ENCODE measurements at regions of chr6 and their contacts with region 1.

Region 1: DNA sequence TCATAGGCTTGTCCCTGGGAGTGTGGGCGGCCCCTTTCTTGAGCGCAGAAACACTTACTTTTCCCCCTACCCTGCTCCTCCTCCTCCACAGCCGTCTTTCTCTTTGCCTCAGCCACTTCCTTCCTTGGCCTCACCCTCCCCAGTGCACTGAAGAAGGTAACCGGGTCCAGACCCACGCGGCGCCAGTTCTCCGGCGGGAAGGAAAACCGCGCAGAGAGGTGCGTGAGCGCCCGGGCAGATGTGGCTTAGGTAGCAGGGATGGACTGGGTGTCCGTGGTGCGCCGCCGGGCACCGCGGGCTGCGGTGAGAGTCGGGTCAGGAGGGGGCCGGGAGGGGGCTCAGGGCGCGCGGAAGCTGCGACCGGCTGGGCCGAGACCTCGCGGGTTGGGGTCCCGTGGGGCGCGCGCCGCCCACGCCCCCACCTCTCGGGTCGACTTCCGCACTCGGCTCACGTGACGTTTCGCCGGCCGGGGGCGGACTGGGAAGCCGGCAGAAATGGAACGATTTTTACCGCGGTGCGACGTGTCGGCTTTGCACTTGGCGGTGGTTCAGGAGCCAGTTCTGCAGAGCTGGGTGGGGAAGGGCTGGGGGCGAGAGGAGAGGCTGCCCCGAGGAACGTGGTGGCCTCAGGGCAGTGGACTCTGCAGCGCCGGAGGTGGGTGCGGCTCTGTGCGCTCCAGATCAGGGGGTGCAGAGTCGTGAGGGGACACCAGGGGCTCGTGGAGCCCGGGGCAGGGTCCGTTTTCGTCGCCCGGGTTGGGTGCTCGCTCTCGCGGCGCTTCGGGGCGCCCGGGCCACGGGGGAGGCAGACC is at the start of gene ABRACL:
- DNase-seq: peak; percentile 70 to 78 (median 76)
- ATAC-seq: peak; percentile 52 to 68 (median 62)
- H3K4me3 ChIP-seq: peak within 1 kb of the TSS; percentile 66 to 91 (median 85)
- H3K27ac ChIP-seq: peak within 1 kb of the TSS; percentile 77 to 93 (median 91)
- H3K4me1 ChIP-seq: peaks cover 0 to 22% (median 3%) of the 10 kb centered on the region in 4 donors
- H3K27me3 ChIP-seq: no peaks in the 10 kb centered on the region
- CTCF ChIP-seq: no peak
- POLR2A ChIP-seq: peak; percentile 39
- total RNA-seq, gene ABRACL: 22.5 to 52.0 (median 39.6) TPM

Region 2: DNA sequence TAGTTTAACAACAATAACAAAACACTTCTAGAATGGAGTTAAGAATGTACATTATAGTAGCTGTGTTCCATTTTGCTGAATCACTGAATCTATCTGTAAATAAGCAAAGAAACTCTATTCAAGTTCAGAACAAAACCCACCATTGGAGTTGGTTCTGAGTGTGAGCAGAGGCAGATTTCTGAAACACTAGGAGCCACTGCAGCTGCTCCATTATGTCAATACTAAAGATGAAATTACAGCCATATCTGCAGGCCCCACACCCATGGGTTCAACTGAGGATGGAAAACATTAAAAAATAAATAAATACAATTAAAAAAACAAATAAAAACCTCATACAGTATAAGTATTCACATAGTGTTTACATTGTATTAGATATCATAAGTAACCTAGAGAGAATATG is 131.8 kb before region 1 on chr6:
- intact Hi-C with region 1: no loop called
- DNase-seq: no peak
- ATAC-seq: no peak
- H3K4me3 ChIP-seq: no peak overlapping the region
- H3K27ac ChIP-seq: no peak overlapping the region
- H3K4me1 ChIP-seq: no peaks in the 10 kb centered on the region
- H3K27me3 ChIP-seq: no peaks in the 10 kb centered on the region
- CTCF ChIP-seq: no peak
- POLR2A ChIP-seq: no peak

Region 3: DNA sequence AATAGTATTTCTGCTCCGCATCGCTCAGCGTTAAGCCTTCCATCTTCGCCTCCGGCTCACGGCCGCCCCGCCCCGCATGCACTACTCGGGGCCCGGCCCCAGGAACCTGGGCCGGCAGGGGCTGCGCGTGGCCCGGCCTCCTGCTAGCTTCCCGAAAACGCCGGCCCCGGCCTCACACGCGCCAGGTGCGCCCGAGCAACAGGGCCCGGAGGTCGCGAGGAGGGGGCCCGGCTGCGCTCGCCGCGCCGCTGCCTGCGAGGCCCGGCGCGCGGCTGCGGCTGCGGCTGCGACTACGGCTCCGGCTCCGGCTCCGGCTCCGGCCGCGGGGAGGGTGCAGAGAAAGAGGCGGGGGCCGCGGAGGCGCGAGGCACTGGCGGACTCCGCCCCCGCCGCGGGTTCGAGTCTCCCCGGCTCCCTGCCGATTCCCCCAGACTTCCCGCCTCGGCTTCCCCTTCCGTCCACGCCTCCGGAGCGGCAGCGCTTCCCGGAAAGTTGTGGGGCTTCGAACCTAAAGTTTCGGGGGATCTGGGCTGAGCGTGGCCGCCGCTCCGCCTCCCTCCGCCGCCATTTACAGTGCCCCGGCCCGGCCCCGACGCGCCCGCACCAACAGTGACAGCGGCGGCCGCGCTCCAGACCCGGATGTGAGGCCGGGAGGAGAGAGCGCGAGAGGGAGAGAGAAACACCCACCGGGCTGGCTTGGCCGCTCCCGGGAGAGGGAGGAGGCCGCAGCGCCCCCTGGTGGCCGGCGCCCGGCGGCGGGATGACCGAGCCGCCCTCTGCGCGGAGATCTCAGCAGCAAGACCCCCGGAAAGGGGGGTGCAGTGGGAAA is 41.0 kb before region 1 on chr6 and contains the start of gene REPS1:
- intact Hi-C with region 1: loop called (anchors 5 to 10 kb)
- DNase-seq: peak; percentile 91 to 94 (median 94)
- ATAC-seq: peak; percentile 87 to 93 (median 90)
- H3K4me3 ChIP-seq: peak within 1 kb of the TSS; percentile 81 to 85 (median 83)
- H3K27ac ChIP-seq: peak within 1 kb of the TSS; percentile 89 to 94 (median 90)
- H3K4me1 ChIP-seq: peaks cover 0 to 63% (median 17%) of the 10 kb centered on the region in 4 donors
- H3K27me3 ChIP-seq: no peaks in the 10 kb centered on the region
- CTCF ChIP-seq: peak; percentile 98 to 100 (median 100)
- POLR2A ChIP-seq: peak; percentile 85
- total RNA-seq, gene REPS1: 17.0 to 68.0 (median 34.0) TPM